HEK293T (cell line): ENCODE measurements at regions of chr20 and their contacts with region 1.

Region 1: DNA sequence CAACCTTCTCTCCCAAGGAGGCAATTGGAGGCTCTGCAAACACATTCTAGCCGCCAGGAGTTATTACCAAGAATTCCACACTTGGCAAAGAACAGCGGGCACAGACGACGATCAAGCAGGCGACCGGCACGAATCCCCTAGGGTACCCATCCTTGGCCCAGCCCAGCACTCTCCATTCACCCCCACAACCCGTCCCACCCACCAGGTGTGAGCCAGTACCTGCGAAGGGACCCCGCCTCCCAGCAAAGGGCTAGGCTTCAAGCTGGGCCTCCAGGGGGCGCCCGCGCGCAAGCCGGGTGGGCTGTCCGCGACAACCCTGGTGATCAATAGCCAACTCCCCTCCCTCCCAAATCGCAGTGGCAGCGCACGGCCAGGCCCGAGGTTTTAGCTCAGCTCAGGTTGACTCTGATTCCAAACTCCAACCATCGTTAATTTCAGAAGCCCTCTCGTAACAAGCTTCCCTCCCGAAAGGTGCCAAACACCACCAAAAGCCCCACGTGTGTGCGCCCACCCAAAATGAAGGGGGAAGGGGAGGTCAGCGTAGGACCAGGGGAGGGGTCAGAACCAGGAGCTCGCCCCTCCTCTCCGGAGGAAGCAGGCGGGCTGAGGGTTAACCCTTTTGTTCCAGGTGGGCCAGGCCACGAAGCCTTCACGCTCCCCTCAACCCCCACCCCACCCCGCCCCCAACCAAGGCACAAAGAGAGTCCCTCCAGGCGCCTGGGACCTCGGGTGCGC is 2.1 kb downstream of the SALL4 start:
- DNase-seq: peak; percentile 85

Region 2: DNA sequence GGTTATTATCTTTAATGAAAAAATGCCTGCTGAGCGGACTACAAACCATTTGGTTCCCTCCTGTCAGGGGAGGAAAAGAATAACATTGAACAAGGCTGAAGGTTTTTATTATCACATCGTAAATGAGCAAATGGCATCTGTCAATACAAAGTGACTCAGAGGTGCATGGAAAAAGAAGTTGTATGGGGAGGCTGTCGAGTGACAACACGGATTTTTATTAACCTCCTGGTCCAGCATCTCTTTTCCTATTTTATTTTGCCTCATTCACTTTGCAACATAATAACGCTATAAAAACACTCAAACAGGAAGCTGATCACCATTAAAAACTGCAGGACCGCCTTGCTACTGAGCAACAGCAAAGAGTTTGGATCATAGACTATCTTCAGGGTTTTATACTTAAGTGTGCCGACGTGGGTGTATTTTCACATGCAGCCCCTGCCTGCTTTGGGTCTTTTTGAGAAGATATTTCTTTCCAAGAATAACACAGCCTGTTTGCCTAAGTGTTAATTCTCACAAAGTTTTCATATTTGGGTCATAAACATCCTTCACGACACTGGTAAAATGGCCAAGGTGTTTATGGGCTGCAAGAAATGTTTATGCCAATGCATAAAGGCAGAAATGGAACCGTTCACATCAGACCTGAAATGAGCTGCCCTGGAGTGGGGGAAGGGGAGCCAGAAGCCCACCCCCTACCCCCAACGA is 134.2 kb after region 1 on chr20:
- CTCF ChIA-PET with region 1: interaction called, 12 read pairs
- POLR2A ChIA-PET with region 1: interaction called, 6 read pairs
- DNase-seq: peak; percentile 46

Region 3: GRCh38 chr20:51961928-51962761 is 161.9 kb after region 1 on chr20:
- CTCF ChIA-PET with region 1: interaction called, 16 read pairs
- POLR2A ChIA-PET with region 1: interaction called, 6 read pairs
- DNase-seq: no peak